Natural killer cell (primary cell): ENCODE measurements at regions of chr19 and their contacts with region 1.

Region 1: DNA sequence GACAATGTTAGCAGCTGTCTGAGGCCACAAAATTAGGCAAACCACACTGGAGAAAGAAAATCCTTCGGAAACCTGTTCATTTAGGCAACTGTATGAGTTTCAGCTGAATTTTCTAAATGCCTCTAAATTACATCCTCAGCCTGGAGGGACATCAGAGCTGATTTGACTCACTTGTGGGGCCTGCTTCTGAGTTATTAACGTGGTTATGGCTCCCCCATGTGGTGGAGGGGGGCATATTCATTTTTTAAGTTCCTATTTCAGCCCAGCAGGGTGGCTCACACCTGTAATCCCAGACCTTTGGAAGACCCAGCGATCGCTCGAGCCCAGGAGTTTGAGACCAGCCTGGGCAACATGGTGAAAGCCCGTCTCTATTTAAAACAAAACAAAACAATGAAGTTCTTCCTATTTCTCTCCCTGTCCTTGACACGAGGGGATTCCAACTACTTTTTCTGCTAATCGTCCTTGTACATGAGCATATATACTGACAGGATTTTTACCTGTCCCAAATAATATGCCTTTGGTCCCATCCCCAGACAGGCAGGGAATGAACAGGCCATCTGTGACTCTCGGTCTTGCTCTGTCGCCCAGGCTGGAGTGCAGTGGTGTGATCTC is 31.5 kb upstream of the HIF3A start:
- DNase-seq: peak; percentile 62 to 89
- ATAC-seq: peak; percentile 50 to 68 (median 53)
- H3K4me3 ChIP-seq: no peak overlapping the region
- H3K4me3 Mint-ChIP-seq: no peak overlapping the region
- H3K27ac ChIP-seq: no peak overlapping the region
- H3K27ac Mint-ChIP-seq: no peak overlapping the region
- H3K4me1 ChIP-seq: peaks cover 32% of the 10 kb centered on the region
- H3K4me1 Mint-ChIP-seq: peaks cover 22 to 35% of the 10 kb centered on the region in 2 donors
- H3K27me3 ChIP-seq: peaks cover 18% of the 10 kb centered on the region
- H3K27me3 Mint-ChIP-seq: peaks cover 46 to 50% of the 10 kb centered on the region in 2 donors
- CTCF ChIP-seq: peak; percentile 94

Region 2: GRCh38 chr19:45862564-45863334 is 402.6 kb before region 1 on chr19 and contains the start of gene SYMPK:
- intact Hi-C with region 1: loop called (anchors 10 kb)
- DNase-seq: peak; percentile 96 to 99
- ATAC-seq: peak; percentile 97 to 99 (median 97)
- H3K4me3 ChIP-seq: peak within 1 kb of the TSS; percentile 96
- H3K4me3 Mint-ChIP-seq: peak within 1 kb of the TSS; percentile 99
- H3K27ac ChIP-seq: peak within 1 kb of the TSS; percentile 94
- H3K27ac Mint-ChIP-seq: peak within 1 kb of the TSS; percentile 91 to 96
- H3K4me1 ChIP-seq: peaks cover 24% of the 10 kb centered on the region
- H3K4me1 Mint-ChIP-seq: peaks cover 21 to 43% of the 10 kb centered on the region in 2 donors
- H3K27me3 ChIP-seq: peaks cover 11% of the 10 kb centered on the region
- H3K27me3 Mint-ChIP-seq: peaks cover 16 to 24% of the 10 kb centered on the region in 2 donors
- CTCF ChIP-seq: no peak
- total RNA-seq, gene SYMPK: 86.4 to 94.8 (median 86.7) TPM

Region 3: DNA sequence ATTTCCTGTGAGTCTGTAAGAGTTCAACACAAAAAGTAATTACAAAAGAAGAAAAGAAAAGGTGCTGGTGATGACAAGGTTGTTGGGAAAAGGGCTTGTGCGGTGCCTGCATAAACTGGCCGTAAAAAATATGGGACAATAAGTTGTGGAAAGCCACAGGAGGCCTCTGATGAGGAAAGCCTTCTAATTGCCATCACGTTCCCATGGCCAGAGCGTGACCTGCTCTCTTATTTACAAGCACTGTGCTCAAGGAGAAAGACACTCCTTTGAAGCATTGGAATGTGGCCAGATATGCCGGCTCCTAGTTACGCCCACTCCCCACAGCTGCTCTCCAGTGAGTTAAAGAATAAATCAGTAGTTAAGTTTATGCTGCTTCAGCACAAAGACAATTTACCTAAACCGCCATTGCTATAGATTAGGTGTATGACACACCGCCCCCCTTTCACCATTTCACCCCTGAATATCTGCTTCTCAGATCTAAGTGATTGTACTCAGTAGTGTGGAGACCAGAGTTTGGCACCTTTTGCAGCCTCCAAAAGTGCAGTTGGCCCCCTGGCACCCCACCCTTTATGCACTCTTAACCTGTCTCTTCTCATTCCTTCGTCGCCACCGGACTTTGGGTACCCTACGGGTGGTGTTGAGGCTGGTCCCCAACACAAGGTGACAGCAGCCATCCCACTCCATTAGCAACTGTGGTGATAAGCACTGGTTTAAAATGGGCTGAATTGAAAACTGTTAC is 234.3 kb before region 1 on chr19:
- intact Hi-C with region 1: loop called (anchors 1 kb)
- DNase-seq: no peak
- ATAC-seq: no peak
- H3K4me3 ChIP-seq: no peak overlapping the region
- H3K4me3 Mint-ChIP-seq: no peak overlapping the region
- H3K27ac ChIP-seq: no peak overlapping the region
- H3K27ac Mint-ChIP-seq: no peak overlapping the region
- H3K4me1 ChIP-seq: peaks cover 2% of the 10 kb centered on the region
- H3K4me1 Mint-ChIP-seq: peaks cover 5 to 13% of the 10 kb centered on the region in 2 donors
- H3K27me3 ChIP-seq: peaks cover 5% of the 10 kb centered on the region
- H3K27me3 Mint-ChIP-seq: peaks cover 32 to 34% of the 10 kb centered on the region in 2 donors
- CTCF ChIP-seq: no peak

Region 4: GRCh38 chr19:46081928-46082727 is 183.2 kb before region 1 on chr19:
- intact Hi-C with region 1: loop called (anchors 1 kb)
- DNase-seq: peak in 1 of 2 donors; percentile 51
- ATAC-seq: peak in 1 of 3 donors; percentile 63
- H3K4me3 ChIP-seq: no peak overlapping the region
- H3K4me3 Mint-ChIP-seq: no peak overlapping the region
- H3K27ac ChIP-seq: no peak overlapping the region
- H3K27ac Mint-ChIP-seq: no peak overlapping the region
- H3K4me1 ChIP-seq: no peaks in the 10 kb centered on the region
- H3K4me1 Mint-ChIP-seq: peaks cover 0 to under 1% of the 10 kb centered on the region in 2 donors
- H3K27me3 ChIP-seq: peaks cover 46% of the 10 kb centered on the region
- H3K27me3 Mint-ChIP-seq: peaks cover 57 to 71% of the 10 kb centered on the region in 2 donors
- CTCF ChIP-seq: no peak

Region 5: GRCh38 chr19:46173886-46174507 is 91.3 kb before region 1 on chr19:
- intact Hi-C with region 1: no loop called
- DNase-seq: no peak
- ATAC-seq: no peak
- H3K4me3 ChIP-seq: no peak overlapping the region
- H3K4me3 Mint-ChIP-seq: no peak overlapping the region
- H3K27ac ChIP-seq: no peak overlapping the region
- H3K27ac Mint-ChIP-seq: no peak overlapping the region
- H3K4me1 ChIP-seq: no peaks in the 10 kb centered on the region
- H3K4me1 Mint-ChIP-seq: no peaks in the 10 kb centered on the region
- H3K27me3 ChIP-seq: peaks cover 2% of the 10 kb centered on the region
- H3K27me3 Mint-ChIP-seq: peaks cover 27 to 38% of the 10 kb centered on the region in 2 donors
- CTCF ChIP-seq: no peak

Region 6: DNA sequence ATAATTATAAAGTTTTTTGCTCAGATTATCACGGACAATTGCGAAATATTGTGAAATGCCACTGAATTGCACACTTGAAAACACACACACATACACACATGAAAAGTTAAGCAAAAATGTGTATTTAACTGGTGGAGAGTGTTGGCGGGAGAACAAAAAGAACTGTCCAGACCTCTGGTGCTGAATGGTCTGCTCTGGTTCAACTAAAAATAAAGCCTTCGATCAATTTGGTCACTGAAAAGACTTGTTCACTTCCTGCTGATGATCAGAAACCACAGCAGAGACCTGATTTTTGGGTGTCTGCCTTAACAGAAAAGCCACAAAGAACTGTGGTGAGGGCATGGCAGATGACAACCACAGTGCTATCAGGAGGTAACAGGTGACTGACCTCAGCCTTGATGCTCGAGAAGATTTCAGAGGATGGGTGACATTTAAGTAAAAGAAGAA is 39.7 kb before region 1 on chr19:
- intact Hi-C with region 1: loop called (anchors 5 kb)
- DNase-seq: peak in 1 of 2 donors; percentile 27
- ATAC-seq: peak; percentile 37 to 79 (median 42)
- H3K4me3 ChIP-seq: no peak overlapping the region
- H3K4me3 Mint-ChIP-seq: no peak overlapping the region
- H3K27ac ChIP-seq: no peak overlapping the region
- H3K27ac Mint-ChIP-seq: no peak overlapping the region
- H3K4me1 ChIP-seq: peaks cover 14% of the 10 kb centered on the region
- H3K4me1 Mint-ChIP-seq: peaks cover 11 to 12% of the 10 kb centered on the region in 2 donors
- H3K27me3 ChIP-seq: peaks cover 30% of the 10 kb centered on the region
- H3K27me3 Mint-ChIP-seq: peaks cover 30 to 50% of the 10 kb centered on the region in 2 donors
- CTCF ChIP-seq: no peak

Region 7: DNA sequence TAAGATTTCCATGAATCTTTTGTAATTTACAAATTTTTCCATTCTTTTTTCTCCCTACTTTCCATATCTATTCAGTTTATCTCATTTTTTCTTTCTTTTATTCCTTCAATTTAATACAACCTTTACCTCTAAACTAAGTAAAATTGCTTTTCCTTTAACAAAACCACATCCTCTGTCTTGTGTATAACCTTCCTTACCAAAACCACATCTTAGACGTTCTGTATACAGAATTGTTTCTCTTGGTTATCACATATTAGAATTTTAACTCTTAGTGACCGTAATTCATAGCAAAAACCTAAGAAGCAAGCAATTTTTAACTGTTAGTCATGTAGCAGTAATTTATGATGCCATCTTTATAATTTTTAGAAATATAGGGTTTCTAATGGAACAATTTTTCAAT is 96.6 kb after region 1 on chr19:
- intact Hi-C with region 1: loop called (anchors 5 kb)
- DNase-seq: peak in 1 of 2 donors; percentile 67
- ATAC-seq: peak; percentile 74 to 87 (median 75)
- H3K4me3 ChIP-seq: peak overlapping the region; percentile 1
- H3K4me3 Mint-ChIP-seq: peak overlapping the region; percentile 92
- H3K27ac ChIP-seq: no peak overlapping the region
- H3K27ac Mint-ChIP-seq: peak overlapping the region; percentile 27 to 85
- H3K4me1 ChIP-seq: peaks cover 46% of the 10 kb centered on the region
- H3K4me1 Mint-ChIP-seq: peaks cover 46 to 52% of the 10 kb centered on the region in 2 donors
- H3K27me3 ChIP-seq: no peaks in the 10 kb centered on the region
- H3K27me3 Mint-ChIP-seq: no peaks in the 10 kb centered on the region
- CTCF ChIP-seq: no peak

Region 8: GRCh38 chr19:46813839-46814363 is 548.6 kb after region 1 on chr19:
- intact Hi-C with region 1: no loop called
- DNase-seq: no peak
- ATAC-seq: no peak
- H3K4me3 ChIP-seq: no peak overlapping the region
- H3K4me3 Mint-ChIP-seq: no peak overlapping the region
- H3K27ac ChIP-seq: no peak overlapping the region
- H3K27ac Mint-ChIP-seq: no peak overlapping the region
- H3K4me1 ChIP-seq: no peaks in the 10 kb centered on the region
- H3K4me1 Mint-ChIP-seq: no peaks in the 10 kb centered on the region
- H3K27me3 ChIP-seq: no peaks in the 10 kb centered on the region
- H3K27me3 Mint-ChIP-seq: peaks cover 0 to 10% of the 10 kb centered on the region in 2 donors
- CTCF ChIP-seq: no peak